Sciatic nerve (tissue), 2 donors: ENCODE measurements at regions of chr10 and their contacts with region 1.

Region 1: DNA sequence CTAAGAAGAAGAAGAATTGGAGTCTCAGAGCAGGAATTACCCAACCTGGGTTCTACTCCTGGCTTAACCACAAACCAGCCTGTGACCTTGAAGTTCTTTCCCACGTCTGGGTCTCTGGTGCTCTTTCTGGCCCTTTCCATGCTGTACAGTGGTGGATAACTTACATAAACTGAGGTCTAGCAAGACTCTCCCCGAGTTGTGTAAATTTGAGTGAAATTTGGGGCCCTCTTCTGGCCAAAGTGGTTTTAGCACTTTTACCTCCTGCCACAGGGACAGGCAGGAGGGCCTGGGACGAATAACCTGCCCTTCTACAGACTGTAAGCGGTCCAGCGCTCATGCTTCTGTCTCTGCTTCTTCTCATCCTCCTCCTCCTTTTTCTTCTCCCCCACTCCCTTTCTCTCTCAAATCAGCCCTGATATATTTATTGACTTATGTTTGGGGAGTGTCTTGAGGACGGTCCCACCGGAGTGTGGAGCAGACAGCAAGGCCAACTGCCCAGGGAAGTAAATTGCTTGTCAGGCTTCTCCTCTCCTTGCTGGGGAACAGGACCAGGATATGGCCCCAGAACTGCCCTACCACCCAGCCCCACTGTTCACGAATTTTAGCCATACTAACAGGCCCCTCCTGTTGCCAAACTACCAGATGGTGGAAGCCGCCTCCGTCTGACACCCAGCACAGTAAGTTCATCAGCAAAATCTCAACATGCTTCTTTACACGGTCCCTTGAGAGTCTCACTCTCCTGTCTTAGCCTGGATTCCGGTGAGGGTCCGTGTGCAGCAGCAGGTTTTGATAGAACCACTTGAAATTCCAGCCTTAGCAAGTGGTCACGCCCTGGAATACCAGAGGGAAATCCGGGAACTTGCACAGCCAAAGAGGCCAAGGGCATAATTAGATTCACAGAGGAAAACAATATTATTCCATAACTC is 4.0 kb upstream of the SH3PXD2A start:
- DNase-seq: peak; percentile 76
- ATAC-seq: peak; percentile 80

Region 2: DNA sequence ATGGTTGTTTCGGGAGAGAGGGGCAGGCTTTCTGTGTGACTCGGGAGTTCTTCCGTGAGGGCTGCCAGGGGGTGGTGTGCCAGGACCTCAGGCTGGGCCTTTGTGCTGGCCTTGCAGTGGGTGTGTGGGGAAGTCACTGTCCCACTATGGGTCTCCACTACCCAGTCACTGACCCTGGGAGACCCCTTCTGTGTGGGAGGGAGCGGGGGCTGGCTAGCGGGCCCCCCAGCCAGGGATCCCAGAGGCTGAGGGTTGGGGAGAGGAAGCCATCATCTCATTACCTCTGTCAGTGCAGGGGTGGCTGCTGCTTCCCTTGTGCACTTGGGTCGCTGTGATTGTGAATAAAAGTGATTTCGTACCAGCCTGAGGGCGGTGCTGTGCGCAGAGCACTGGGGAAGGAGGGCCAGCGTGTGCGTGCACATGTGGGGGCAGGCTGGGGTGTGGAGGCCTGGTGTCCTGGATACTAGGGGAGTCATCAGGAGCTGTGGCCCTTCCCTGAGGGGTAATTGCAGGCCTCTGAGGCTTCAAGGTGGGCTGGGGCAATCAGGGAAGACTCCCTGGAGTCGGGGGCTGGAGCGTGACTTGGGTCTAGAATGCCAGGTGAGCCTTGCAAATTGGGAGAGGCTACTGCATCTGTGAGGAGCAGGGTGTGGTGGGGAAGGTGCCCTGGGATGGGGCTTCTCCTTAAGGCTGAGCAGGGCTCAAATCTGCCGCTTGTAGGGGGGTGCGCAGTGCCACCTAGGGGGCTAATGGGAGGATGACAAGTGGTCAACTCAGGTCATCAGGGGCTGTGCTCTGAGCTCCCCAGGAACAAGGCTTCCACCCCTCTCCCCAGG is 267.0 kb before region 1 on chr10:
- intact Hi-C with region 1: loop called (anchors 10 kb)
- DNase-seq: no peak
- ATAC-seq: peak; percentile 17

Region 3: DNA sequence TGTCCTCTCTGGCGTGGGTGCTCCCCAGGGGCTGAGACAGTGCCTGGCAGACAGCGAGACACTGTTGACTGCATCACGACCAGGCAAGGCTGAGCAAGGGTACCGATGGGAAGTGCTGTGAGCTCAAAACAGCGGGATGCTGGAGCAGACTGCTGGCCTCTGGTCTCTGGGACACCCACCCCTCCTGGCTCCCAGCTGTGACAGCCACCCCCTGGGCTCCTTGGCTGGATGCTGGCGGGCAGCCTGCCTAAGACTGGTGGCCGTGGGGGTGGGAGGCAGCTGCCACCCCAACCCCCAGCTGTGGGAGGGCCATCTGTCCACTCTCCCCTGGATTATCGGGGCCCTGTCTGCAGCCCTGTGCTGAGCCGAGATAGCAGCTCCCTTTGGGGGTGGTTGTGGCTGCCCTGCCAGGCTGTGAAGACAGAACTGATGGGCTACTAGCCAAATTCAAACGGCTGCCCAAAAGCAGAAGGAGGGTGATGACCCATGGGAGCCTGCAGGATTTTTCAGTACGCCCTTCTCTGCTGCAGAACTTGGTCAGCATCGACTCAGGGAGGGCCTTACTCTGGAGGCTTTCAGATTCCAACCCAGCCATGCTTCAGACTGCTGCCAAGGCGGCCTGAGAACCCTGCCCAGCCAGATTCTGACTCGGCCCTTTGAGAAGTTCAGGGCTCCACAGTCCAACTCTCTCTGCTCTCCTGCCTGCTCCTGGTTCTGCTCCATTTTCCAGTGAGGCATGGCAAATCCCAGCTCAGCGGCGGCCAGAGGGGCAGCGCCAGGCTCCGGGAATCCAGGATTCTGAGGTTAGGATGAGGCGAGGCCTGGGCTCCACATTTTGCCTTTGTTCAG is 240.6 kb before region 1 on chr10:
- intact Hi-C with region 1: loop called (anchors 10 kb)
- DNase-seq: no peak
- ATAC-seq: peak; percentile 67

Region 4: GRCh38 chr10:103712570-103713498 is 146.6 kb before region 1 on chr10:
- intact Hi-C with region 1: loop called (anchors 5 kb)
- DNase-seq: peak; percentile 93
- ATAC-seq: peak; percentile 85

Region 5: DNA sequence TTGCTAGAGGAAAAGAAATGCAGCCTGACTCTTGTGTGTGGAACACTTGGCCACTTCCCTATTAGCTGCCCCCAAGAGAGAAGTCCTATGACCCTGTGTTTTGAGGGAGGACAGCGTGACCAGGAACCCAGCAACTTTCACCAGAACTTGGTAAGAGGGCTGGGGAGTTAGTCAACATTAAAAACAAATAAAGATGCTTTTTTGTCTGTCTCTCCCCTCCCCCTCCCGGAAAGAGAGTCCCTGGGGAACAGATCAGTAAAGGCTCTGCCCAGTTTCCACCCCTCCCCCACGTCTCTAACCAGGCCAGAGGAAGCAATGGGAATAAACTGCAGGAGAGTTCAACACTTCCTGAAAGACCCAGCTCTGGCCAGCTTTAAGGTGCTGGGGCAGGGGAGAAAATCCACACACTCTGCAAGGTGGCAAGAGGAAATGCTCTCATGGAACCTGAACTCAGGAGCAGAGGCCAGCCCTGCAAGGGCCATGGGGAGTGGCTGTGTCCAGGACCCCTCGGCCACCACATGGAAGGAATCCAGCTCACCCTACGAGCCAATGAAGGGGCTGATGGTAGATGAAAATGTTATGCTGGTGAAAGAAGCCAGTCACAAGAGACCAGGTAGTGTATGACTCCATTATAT is 25.6 kb before region 1 on chr10:
- intact Hi-C with region 1: no loop called
- DNase-seq: peak; percentile 81
- ATAC-seq: peak; percentile 85